ENCODE measurements at regions of chr11 and their contacts with region 1.

Region 1: DNA sequence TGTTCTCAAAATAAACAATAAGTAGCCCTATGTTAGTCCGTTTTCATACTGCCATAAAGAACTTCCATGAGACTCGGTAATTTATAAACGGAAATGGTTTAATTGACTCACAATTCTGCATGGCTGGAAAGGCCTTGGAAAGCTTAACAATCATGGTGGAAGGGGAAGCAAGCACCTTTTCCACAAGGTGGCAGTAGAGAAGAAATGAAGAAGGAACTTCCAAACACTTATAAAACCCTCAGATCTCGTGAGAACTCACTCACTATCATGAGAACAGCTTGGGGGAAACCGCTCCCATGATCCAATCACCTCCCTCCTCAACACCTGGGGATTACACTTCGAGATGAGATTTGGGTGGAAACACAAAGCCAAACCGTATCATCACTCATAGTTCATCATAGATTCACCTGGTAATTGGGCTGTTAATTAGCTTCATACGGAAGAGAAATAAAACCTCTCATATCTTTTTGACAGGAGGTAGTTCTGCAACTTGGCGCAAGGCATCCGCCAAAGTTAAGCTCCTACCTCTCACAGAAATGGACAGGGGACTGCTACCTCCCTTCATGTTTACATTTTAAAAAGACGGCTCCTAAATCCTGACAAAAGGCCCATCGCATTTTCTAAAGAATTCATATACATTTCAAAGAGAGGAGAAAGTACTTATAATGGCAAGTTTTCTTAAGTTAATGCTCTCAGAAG is 49.0 kb downstream of the MUC15 start:
- DNase-seq: peak; percentile 28
- H3K4me3 ChIP-seq: no peak overlapping the region
- H3K27ac ChIP-seq: no peak overlapping the region
- H3K4me1 ChIP-seq: no peaks in the 10 kb centered on the region
- CTCF ChIP-seq: peak; percentile 69

Region 2: DNA sequence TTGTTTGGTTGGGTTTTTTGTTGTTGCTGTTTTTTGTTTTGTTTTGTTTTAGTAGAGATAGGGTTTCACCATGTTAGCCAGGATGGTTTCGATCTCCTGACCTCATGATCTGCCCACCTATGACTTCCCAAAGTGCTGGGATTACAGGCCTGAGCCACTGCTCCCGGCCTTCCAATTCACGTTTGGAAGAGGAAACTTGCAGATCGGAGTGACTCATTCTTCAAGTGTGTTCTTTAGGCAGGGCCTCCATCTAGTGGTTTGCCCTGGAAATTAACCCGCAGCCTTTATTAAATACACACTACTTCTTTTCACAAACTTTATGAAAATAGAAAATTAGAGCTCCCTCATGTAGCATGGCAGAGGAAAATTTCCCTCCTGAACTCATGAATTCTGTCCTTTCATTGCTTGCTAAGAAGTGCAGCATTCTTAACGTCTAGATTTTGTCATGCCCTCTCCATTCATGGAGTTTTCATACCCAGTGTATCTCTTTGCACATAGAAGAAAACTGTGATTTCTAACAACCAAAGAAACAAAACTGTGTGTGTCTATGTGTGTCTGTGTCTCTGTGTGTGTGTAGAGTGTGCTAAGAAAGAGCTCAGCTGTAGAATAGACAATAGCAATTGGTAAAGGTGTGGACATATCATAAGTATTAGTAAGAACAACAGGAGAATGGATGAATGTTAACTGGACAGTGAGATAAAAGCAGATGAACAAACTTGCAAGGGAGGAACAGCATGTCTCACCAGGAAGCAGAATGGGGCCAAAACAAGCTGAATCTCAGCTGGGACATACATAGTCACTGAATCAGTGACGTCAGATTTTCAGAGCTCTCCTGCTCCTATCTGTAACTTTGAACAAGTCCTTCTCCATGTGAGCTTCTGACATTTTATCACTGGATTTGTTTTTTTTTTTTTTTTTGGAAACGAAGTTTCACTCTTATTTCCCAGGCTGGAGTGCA is 635.9 kb after region 1 on chr11:
- CTCF ChIA-PET with region 1: no interaction called
- POLR2A ChIA-PET with region 1: no interaction called
- intact Hi-C with region 1: loop called (anchors 5 kb)
- DNase-seq: peak; percentile 71
- H3K4me3 ChIP-seq: no peak overlapping the region
- H3K27ac ChIP-seq: no peak overlapping the region
- H3K4me1 ChIP-seq: no peaks in the 10 kb centered on the region
- CTCF ChIP-seq: peak; percentile 88